ENCODE measurements at regions of chr16 and their contacts with region 1.

Region 1: GRCh38 chr16:87765776-87766484 is at the start of gene KLHDC4:
- DNase-seq: peak; percentile 38
- ATAC-seq: peak; percentile 90
- H3K4me3 ChIP-seq: peak within 1 kb of the TSS; percentile 89
- H3K27ac ChIP-seq: peak within 1 kb of the TSS; percentile 93
- H3K4me1 ChIP-seq: peaks cover 6% of the 10 kb centered on the region
- H3K27me3 ChIP-seq: no peaks in the 10 kb centered on the region
- CTCF ChIP-seq: no peak
- EP300 ChIP-seq: no peak
- POLR2A ChIP-seq: peak; percentile 95
- RAD21 ChIP-seq: no peak
- polyA plus RNA-seq, gene KLHDC4: 0.80 to 4.1 TPM

Region 2: DNA sequence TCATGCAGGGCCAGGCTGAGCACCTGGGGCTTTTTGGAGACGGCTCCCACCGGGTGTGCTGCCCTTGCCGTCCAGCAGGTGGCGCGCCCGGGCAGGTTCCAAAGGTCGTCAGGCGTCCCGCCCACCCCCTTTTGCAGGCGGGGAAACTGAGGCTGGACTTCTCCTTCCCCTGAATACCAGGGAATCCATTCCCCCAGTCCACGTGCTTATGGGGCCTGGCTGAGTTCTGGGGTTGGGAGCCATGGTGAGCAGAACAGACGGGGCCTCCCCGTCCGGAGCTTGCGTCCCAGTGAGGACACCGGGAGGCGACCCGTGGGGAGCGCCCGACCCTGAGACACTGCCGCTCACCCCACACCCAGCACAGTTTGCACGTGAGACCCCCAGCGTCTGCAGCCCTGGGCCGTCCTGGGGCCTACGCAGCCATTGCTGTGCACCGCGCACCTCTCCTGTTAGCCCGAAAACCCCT is 215.4 kb before region 1 on chr16:
- CTCF ChIA-PET with region 1: interaction called, 6 read pairs
- POLR2A ChIA-PET with region 1: no interaction called
- RAD21 ChIA-PET with region 1: no interaction called
- SMC1A ChIA-PET with region 1: no interaction called
- in situ Hi-C with region 1: no loop called
- intact Hi-C with region 1: loop called (anchors 10 kb)
- DNase-seq: no peak
- ATAC-seq: peak; percentile 71
- H3K4me3 ChIP-seq: no peak overlapping the region
- H3K27ac ChIP-seq: no peak overlapping the region
- H3K4me1 ChIP-seq: no peaks in the 10 kb centered on the region
- H3K27me3 ChIP-seq: no peaks in the 10 kb centered on the region
- CTCF ChIP-seq: peak; percentile 72 to 92 (median 84)
- EP300 ChIP-seq: no peak
- POLR2A ChIP-seq: no peak
- RAD21 ChIP-seq: peak; percentile 59

Region 3: GRCh38 chr16:87587636-87588035 is 178.3 kb before region 1 on chr16:
- CTCF ChIA-PET with region 1: interaction called, 6 read pairs
- POLR2A ChIA-PET with region 1: no interaction called
- RAD21 ChIA-PET with region 1: interaction called, 11 read pairs
- SMC1A ChIA-PET with region 1: no interaction called
- in situ Hi-C with region 1: no loop called
- intact Hi-C with region 1: no loop called
- DNase-seq: no peak
- ATAC-seq: no peak
- H3K4me3 ChIP-seq: no peak overlapping the region
- H3K27ac ChIP-seq: no peak overlapping the region
- H3K4me1 ChIP-seq: no peaks in the 10 kb centered on the region
- H3K27me3 ChIP-seq: no peaks in the 10 kb centered on the region; a peak in 2 of 4 replicates
- CTCF ChIP-seq: no peak
- EP300 ChIP-seq: no peak
- POLR2A ChIP-seq: no peak
- RAD21 ChIP-seq: no peak

Region 4: DNA sequence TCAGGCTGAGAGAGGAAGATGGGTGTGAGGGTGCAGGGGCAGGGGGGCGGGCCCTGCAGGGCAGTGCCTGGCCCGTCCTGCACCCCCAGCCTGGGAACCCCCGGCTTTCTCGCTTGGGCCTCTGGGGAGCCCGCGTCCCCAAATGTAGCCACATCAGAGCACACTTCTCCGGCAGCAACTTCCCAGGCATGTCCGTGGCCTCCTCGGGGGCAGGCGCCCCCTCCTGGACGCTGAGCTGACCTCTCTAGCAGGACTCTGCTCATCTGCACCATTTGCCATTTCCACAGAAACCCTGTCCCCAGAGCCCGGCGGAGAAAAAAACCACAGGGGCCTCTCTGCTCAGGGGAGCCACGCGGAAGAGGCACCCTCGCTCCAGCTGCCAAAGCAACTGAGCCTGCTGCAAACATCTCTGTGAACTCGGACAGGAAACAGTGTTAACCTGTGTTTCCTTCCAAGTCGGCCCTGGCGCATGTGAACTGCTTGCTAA is 63.6 kb before region 1 on chr16:
- CTCF ChIA-PET with region 1: interaction called, 6 read pairs
- POLR2A ChIA-PET with region 1: no interaction called
- RAD21 ChIA-PET with region 1: interaction called, 3 read pairs
- SMC1A ChIA-PET with region 1: interaction called, 4 read pairs
- in situ Hi-C with region 1: no loop called
- intact Hi-C with region 1: loop called (anchors 5 kb)
- DNase-seq: peak; percentile 33
- ATAC-seq: peak; percentile 83
- H3K4me3 ChIP-seq: no peak overlapping the region
- H3K27ac ChIP-seq: no peak overlapping the region
- H3K4me1 ChIP-seq: peaks cover 45% of the 10 kb centered on the region
- H3K27me3 ChIP-seq: no peaks in the 10 kb centered on the region
- CTCF ChIP-seq: peak; percentile 53 to 68 (median 68)
- EP300 ChIP-seq: no peak
- POLR2A ChIP-seq: peak; percentile 14; the same call in 1 of the 2 replicates
- RAD21 ChIP-seq: peak; percentile 54

Region 5: GRCh38 chr16:87723226-87723623 is 42.7 kb before region 1 on chr16:
- CTCF ChIA-PET with region 1: interaction called, 12 read pairs
- POLR2A ChIA-PET with region 1: no interaction called
- RAD21 ChIA-PET with region 1: interaction called, 3 read pairs
- SMC1A ChIA-PET with region 1: interaction called, 3 read pairs
- in situ Hi-C with region 1: no loop called
- intact Hi-C with region 1: no loop called
- DNase-seq: peak; percentile 58
- ATAC-seq: peak; percentile 79
- H3K4me3 ChIP-seq: no peak overlapping the region
- H3K27ac ChIP-seq: peak overlapping the region; percentile 87
- H3K4me1 ChIP-seq: peaks cover 25% of the 10 kb centered on the region
- H3K27me3 ChIP-seq: no peaks in the 10 kb centered on the region
- CTCF ChIP-seq: no peak
- EP300 ChIP-seq: peak in 1 of 2 experiments; percentile 30; a peak in 2 of 4 replicates
- POLR2A ChIP-seq: no peak
- RAD21 ChIP-seq: no peak